HEK293 (cell line): ENCODE measurements at regions of chr6 and their contacts with region 1.

Region 1: GRCh38 chr6:42532038-42532669 is 31.7 kb upstream of the UBR2 start:
- H3K4me3 ChIP-seq: no peak overlapping the region
- H3K27ac ChIP-seq: no peak overlapping the region
- H3K4me1 ChIP-seq: no peaks in the 10 kb centered on the region
- CTCF ChIP-seq: peak; percentile 42; the same call in 1 of the 2 replicates

Region 2: GRCh38 chr6:42315991-42316378 is 216.2 kb before region 1 on chr6:
- CTCF ChIA-PET with region 1: interaction called, 12 read pairs
- POLR2A ChIA-PET with region 1: no interaction called
- H3K4me3 ChIP-seq: no peak overlapping the region
- H3K27ac ChIP-seq: no peak overlapping the region; the same call in 1 of the 2 replicates
- H3K4me1 ChIP-seq: peaks cover 13% of the 10 kb centered on the region
- CTCF ChIP-seq: no peak

Region 3: GRCh38 chr6:42460883-42461282 is 71.3 kb before region 1 on chr6:
- CTCF ChIA-PET with region 1: interaction called, 23 read pairs
- POLR2A ChIA-PET with region 1: no interaction called
- H3K4me3 ChIP-seq: no peak overlapping the region
- H3K27ac ChIP-seq: no peak overlapping the region
- H3K4me1 ChIP-seq: no peaks in the 10 kb centered on the region
- CTCF ChIP-seq: no peak

Region 4: DNA sequence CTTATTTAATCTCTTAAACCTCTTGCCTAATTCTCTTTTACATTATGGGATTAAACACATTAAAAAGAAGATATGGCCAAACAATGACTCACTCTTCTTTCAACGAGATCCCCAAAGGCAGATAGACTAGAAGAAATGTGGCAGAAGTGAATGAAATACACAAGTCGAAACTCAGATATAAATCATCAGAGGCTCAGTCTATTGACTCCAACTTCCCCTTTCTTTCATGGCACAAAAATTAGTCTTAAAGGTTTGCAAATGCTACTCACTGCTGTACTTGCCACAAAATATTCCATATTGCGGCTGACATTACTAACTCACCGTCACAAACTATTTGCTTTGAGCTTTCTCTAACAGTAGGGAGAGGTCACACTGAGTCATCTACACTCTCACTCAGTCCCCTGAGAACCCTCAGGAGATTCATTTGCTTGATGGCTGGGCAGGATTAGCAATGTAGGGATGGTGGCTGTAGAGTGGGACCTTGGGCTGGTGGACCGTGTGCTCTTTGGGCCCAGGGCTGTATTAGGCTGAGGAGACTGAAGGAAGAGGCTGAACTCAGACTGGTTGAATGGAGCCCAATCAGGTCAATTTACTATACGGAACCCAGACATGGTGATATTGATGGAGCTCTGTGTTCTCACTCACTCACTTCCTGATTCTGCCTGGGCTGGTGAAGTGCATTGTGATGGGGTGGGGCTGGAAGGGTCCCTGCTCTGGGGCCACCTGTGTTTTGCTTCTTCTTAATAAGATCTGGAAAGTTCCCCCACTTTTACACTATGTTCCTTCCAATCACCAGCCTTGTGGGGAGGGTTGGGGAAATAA is 11.2 kb before region 1 on chr6:
- CTCF ChIA-PET with region 1: interaction called, 47 read pairs
- POLR2A ChIA-PET with region 1: interaction called, 4 read pairs
- H3K4me3 ChIP-seq: no peak overlapping the region
- H3K27ac ChIP-seq: no peak overlapping the region
- H3K4me1 ChIP-seq: no peaks in the 10 kb centered on the region
- CTCF ChIP-seq: no peak

Region 5: GRCh38 chr6:43013843-43014433 is 481.8 kb after region 1 on chr6 and contains the starts of genes KLHDC3 and MEA1:
- CTCF ChIA-PET with region 1: no interaction called
- POLR2A ChIA-PET with region 1: no interaction called
- H3K4me3 ChIP-seq: peak within 1 kb of the TSS; percentile 70
- H3K27ac ChIP-seq: peak within 1 kb of the TSS; percentile 76
- H3K4me1 ChIP-seq: peaks cover 12% of the 10 kb centered on the region
- CTCF ChIP-seq: no peak